ENCODE measurements at regions of chr1 and their contacts with region 1.

Region 1: GRCh38 chr1:181128592-181129497 is 40.3 kb downstream of the IER5 start:
- DNase-seq: peak in 1 of 2 experiments; percentile 61
- H3K4me3 ChIP-seq: peak overlapping the region in 1 of 4 experiments; percentile 17; a peak in 1 of 8 replicates
- H3K27ac ChIP-seq: no peak overlapping the region
- H3K4me1 ChIP-seq: peaks cover 16 to 38% (median 26%) of the 10 kb centered on the region in 4 experiments
- H3K27me3 ChIP-seq: no peaks in the 10 kb centered on the region; a peak in 1 of 7 replicates
- CTCF ChIP-seq: no peak
- EP300 ChIP-seq: no peak
- POLR2A ChIP-seq: no peak
- RAD21 ChIP-seq: 0 out of 4 replicates have a peak, but pooled peaks of 1 of the 2 experiments have one; percentile 5

Region 2: DNA sequence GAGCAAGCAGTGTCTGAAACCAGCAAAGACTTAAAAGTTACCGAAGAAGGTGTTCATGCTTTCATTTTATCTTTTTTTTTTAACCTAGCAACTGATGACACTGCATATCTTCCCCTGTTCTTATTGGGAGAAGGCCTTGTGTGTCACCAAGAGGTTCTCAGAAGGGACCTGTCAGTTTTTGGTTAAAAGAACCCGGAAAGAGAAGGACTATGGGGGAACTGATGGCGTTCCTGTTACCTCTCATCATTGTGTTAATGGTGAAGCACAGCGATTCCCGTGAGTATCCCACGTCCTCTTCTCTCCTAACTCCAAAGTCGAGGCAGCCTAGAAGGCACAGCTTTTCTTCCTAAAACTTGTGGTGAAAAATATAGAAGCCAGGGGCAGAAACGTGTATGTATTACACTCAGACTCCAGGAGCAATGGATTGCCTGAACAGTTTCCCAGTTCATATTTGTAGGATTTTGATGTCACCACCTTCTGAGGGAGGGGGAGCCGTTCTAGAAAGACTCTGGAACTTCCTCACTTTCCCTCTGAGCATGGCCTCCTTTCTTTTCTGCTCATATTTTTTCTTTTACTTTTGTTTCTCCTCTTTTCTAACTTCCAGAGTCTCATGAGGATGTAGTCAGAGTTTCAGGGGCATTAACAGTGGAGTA is 94.9 kb before region 1 on chr1 and contains the start of gene MR1:
- CTCF ChIA-PET with region 1: interaction called, 13 read pairs
- POLR2A ChIA-PET with region 1: no interaction called
- DNase-seq: no peak
- H3K4me3 ChIP-seq: no peak within 1 kb of the TSS
- H3K27ac ChIP-seq: no peak within 1 kb of the TSS
- H3K4me1 ChIP-seq: no peaks in the 10 kb centered on the region
- H3K27me3 ChIP-seq: no peaks in the 10 kb centered on the region
- CTCF ChIP-seq: no peak
- EP300 ChIP-seq: no peak
- POLR2A ChIP-seq: no peak
- RAD21 ChIP-seq: no peak
- total RNA-seq, gene MR1: 0.19 TPM in 1 of 2 replicates, not detected in the other

Region 3: DNA sequence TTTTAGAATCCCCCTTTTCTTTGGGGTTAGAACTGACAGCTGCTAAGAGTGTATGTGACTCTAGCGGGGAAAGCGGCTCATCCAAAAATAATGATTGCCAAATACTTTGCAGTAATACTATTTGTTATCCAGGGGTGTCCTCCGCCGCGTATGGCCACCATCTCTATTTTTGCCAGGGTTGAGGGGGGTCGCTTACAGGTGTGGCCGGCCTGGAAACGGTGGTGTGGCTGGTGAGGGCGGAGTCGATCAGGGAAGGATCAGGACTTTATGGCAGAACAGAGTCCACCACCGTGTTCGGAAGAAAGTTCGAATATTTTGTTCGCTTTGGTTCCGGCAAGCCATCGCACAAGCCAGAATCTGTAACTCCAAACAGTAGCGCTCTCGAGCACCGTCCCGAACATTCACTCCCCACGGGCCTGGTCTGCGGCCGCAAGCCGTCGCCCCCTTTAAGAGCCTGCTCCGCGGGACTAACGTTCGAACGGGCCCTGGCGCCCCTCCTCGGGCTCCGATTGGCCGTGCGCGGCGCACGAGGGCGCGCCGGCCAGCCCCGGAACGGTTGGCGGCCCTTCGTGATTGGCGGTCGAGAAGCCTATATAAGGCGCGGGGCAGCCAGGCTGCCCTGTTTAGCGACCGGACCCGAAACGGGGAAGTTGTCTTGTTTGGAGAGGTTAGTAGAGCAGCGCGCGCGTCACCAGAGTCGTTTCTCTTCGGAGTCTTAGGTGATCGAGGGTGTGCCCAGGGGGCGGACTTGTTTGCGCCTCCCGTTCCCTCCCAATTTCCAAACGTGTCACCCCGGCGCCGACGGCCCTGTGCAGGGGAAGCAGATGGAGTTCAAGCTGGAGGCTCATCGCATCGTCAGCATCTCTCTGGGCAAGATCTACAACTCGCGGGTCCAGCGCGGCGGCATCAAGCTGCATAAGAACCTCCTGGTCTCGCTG is 40.5 kb before region 1 on chr1 and contains the start of gene IER5:
- CTCF ChIA-PET with region 1: interaction called, 5 read pairs
- POLR2A ChIA-PET with region 1: interaction called, 32 read pairs
- DNase-seq: peak; percentile 76 to 97
- H3K4me3 ChIP-seq: peak within 1 kb of the TSS; percentile 58 to 72 (median 64)
- H3K27ac ChIP-seq: no peak within 1 kb of the TSS
- H3K4me1 ChIP-seq: peaks cover 0 to 4% (median under 1%) of the 10 kb centered on the region in 4 experiments; a peak in 2 of 7 replicates
- H3K27me3 ChIP-seq: peaks cover 0 to 31% (median 18%) of the 10 kb centered on the region in 4 experiments; a peak in 6 of 7 replicates
- CTCF ChIP-seq: no peak
- EP300 ChIP-seq: no peak
- POLR2A ChIP-seq: peak; percentile 99
- RAD21 ChIP-seq: peak in 1 of 2 experiments; percentile 2; a peak in 1 of 4 replicates
- total RNA-seq, gene IER5: 7.1 and 7.7 TPM in 2 replicates

Region 4: DNA sequence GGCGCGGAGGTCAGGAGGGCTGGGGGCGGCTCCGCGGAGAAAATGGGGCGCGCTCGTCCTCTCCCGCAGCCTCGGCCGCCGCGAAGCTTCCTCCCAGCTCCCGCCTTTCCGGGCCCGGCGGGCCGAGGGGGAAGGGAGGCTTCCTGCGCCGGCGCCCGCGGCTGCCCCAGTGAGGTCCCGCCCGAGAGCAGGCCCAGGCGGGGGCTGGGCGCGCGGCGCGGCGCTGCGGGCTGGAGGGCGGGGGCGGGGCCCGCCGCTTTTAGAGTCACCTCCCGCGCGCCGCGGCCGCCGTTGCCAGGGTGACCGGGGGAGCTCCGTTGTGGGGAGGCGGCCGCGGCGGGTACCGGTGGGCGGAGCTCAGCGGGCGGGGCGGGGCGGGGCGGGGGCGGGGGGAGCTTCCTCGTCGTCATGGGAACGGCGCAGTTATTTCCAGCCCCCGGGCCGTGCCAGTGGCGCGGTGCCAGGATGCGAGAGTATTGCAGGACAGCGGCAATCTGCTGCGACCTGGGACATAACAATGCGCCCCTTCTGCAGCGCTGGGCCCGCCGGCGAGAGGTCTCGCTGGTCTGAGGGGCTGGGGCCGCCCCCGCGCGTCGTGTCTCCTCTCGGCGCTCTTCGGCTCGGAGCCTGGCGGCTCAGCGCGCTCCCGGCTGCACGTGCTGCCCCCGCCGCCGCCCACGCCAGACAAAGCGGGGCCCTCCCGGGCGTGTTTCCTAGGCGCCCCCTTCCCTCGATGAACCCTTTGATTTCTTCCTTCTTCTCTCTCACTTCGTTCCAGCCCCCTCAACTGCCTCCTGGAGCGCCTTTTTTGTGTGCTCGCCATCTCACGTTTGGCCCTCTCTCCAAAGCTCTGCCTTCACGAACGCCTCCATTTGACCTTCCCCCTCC is 23.5 kb before region 1 on chr1:
- CTCF ChIA-PET with region 1: interaction called, 28 read pairs
- POLR2A ChIA-PET with region 1: interaction called, 37 read pairs
- DNase-seq: peak in 1 of 2 experiments; percentile 86
- H3K4me3 ChIP-seq: peak overlapping the region; percentile 53 to 75 (median 64)
- H3K27ac ChIP-seq: peak overlapping the region; percentile 62; the same call in 1 of the 2 replicates
- H3K4me1 ChIP-seq: peaks cover 8 to 40% (median 21%) of the 10 kb centered on the region in 4 experiments
- H3K27me3 ChIP-seq: peaks cover 9 to 42% (median 41%) of the 10 kb centered on the region in 4 experiments
- CTCF ChIP-seq: no peak
- EP300 ChIP-seq: no peak
- POLR2A ChIP-seq: 0 out of 3 replicates have a peak, but pooled peaks of 1 of the 2 experiments have one; percentile 27
- RAD21 ChIP-seq: no peak

Region 5: DNA sequence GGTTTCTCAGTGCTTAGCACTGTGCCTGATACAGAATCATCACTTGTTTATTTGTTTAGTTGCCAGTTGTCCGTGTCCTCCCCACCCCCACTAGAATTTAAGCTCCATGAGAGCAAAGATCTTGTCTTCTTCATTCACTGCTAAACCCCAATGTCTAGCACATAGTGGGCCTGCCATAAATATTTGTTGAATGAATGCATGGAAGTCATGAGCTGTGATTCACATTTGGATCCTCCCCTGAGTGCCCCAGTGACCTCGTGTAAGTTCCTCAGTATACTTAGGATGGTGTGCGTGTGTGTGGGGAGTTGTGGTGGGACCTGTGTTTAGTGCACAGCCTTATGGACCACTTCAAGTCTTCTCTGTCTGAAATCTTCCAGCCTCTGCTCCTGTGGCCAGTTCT is 17.3 kb before region 1 on chr1:
- CTCF ChIA-PET with region 1: interaction called, 28 read pairs
- POLR2A ChIA-PET with region 1: interaction called, 37 read pairs
- DNase-seq: no peak
- H3K4me3 ChIP-seq: no peak overlapping the region
- H3K27ac ChIP-seq: no peak overlapping the region
- H3K4me1 ChIP-seq: peaks cover 6 to 13% (median 8%) of the 10 kb centered on the region in 4 experiments; a peak in 6 of 7 replicates
- H3K27me3 ChIP-seq: peaks cover 2 to 26% (median 12%) of the 10 kb centered on the region in 4 experiments
- CTCF ChIP-seq: no peak
- EP300 ChIP-seq: no peak
- POLR2A ChIP-seq: no peak
- RAD21 ChIP-seq: no peak

Region 6: DNA sequence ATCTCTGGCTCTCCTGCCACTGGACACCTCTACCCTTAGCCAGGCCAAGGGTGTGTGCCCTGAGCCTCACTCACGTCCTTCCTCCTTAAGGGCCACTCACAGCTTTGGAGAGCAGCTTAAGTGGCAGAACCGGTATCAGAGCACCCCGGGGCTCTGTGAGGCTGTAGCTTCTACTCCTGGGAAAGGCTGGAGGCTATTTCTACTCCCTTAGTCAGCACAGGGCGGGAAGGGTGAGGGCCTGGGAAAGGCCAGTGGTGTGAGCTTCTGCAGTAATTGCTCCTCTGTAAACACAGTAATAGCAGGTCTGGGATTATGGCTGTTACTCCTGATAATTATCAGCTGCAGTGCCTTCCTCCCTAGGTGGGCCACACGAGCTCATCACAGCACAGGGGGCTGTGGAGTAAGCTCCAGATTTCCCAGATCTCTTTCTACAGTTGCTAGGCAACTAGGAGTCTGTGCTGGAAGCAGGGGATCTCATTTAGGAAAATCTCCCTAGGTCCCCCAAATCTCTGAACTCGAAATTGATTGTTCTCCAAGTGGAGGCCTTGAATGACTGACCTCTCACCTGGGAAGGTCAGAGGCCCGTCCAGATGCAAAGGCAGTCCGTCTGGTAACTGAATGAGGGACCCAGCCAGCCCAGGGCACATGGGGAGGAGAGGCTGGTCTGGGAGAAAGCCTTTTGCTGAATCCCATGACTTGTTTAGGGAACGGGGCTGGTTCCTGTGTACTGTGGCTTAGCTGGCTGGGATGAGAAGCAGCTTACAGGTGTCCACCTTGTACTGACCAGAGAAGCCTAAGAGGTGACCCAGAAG is 11.0 kb before region 1 on chr1:
- CTCF ChIA-PET with region 1: interaction called, 17 read pairs
- POLR2A ChIA-PET with region 1: interaction called, 7 read pairs
- DNase-seq: no peak
- H3K4me3 ChIP-seq: no peak overlapping the region
- H3K27ac ChIP-seq: no peak overlapping the region
- H3K4me1 ChIP-seq: peaks cover 2 to 9% (median 7%) of the 10 kb centered on the region in 4 experiments; a peak in 5 of 7 replicates
- H3K27me3 ChIP-seq: no peaks in the 10 kb centered on the region; a peak in 1 of 7 replicates
- CTCF ChIP-seq: no peak
- EP300 ChIP-seq: no peak
- POLR2A ChIP-seq: no peak
- RAD21 ChIP-seq: no peak